BJ (cell line): ENCODE measurements at regions of chr11 and their contacts with region 1.

Region 1: DNA sequence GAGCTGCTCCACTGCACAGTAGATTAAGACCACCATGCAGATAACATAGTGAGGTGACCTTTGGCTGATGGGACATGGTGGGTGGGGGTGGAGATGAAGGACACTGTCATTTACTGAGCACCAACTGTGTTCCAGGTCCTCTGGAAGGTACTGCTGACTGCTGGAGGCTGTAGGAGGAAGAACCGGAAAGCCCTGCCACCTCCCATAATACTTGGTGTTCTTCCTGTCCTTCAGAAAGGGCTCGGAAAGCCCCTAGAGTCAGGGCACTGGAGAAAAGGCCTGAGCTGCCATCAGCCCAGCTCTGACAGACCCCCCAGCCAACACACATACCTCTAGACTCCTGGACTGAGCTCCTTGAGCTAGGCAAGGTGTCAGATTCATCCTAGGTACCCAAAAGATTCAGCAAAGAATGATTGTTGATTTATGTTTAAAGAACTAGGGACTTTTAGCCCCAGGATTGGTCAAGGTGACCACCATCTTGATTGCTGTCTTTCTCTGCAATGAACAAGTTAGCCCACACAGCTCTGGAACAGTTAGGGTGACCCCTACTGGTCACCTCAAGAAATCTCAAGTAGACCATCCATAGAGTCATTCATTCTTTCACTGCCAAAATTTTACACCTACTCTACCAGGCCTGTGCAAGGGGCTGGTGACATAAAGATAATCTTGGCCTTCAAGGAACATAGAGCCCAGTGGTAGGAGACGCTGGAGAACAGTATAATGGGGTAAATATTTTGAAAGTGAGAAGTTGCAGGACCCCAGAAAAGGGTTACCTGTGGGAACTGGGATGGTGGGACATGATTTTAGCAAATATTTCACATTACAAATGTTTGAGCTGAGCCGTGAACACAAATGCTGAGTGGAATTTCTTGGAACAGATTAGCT is 39.4 kb downstream of the IRAG1 start:
- DNase-seq: no peak
- H3K4me3 ChIP-seq: no peak overlapping the region
- H3K27me3 ChIP-seq: no peaks in the 10 kb centered on the region
- CTCF ChIP-seq: peak; percentile 60

Region 2: DNA sequence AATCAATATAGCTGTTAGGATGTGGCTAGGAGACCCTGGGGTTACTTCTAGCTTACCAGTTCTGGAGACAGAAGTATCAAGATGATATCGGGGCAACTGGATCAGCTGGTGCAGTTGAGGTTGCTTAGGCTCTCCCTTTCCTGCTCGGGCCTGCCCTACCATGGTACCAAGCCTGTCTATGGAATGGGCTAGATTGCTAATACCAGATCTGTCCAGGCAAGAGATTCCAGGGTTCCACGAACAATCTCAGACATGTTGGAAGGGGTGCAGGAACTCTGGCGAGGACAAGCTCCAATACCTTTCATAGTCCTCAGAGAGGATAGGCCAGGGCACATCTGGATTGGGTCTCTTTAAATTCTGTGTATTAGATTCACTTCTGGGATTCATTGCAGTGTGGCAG is 295.5 kb before region 1 on chr11:
- CTCF ChIA-PET with region 1: no interaction called
- POLR2A ChIA-PET with region 1: no interaction called
- DNase-seq: no peak
- H3K4me3 ChIP-seq: no peak overlapping the region
- H3K27me3 ChIP-seq: no peaks in the 10 kb centered on the region
- CTCF ChIP-seq: no peak

Region 3: GRCh38 chr11:10623797-10624761 is 30.1 kb before region 1 on chr11:
- CTCF ChIA-PET with region 1: interaction called, 13 read pairs
- POLR2A ChIA-PET with region 1: no interaction called
- DNase-seq: no peak
- H3K4me3 ChIP-seq: no peak overlapping the region
- H3K27me3 ChIP-seq: no peaks in the 10 kb centered on the region
- CTCF ChIP-seq: peak; percentile 55